Spleen (tissue), 13 donors: ENCODE measurements at regions of chr12 and their contacts with region 1.

Region 1: GRCh38 chr12:45388545-45388944 is 172.7 kb downstream of the ANO6 start:
- DNase-seq: no peak
- H3K4me3 ChIP-seq: no peak overlapping the region
- H3K27ac ChIP-seq: no peak overlapping the region
- H3K4me1 ChIP-seq: no peaks in the 10 kb centered on the region
- H3K27me3 ChIP-seq: no peaks in the 10 kb centered on the region
- CTCF ChIP-seq: peak in 9 of 11 experiments; percentile 15 to 59 (median 38)
- POLR2A ChIP-seq: no peak

Region 2: GRCh38 chr12:45170456-45171042 is 218.0 kb before region 1 on chr12:
- intact Hi-C with region 1: loop called (anchors 5 kb)
- DNase-seq: peak; percentile 87
- H3K4me3 ChIP-seq: no peak overlapping the region
- H3K27ac ChIP-seq: no peak overlapping the region
- H3K4me1 ChIP-seq: no peaks in the 10 kb centered on the region
- H3K27me3 ChIP-seq: peaks cover 0 to 4% (median 0%) of the 10 kb centered on the region in 7 donors
- CTCF ChIP-seq: peak; percentile 50 to 91 (median 82)
- POLR2A ChIP-seq: no peak